CD8-positive, alpha-beta T cell (primary cell): ENCODE measurements at regions of chr4 and their contacts with region 1.

Region 1: DNA sequence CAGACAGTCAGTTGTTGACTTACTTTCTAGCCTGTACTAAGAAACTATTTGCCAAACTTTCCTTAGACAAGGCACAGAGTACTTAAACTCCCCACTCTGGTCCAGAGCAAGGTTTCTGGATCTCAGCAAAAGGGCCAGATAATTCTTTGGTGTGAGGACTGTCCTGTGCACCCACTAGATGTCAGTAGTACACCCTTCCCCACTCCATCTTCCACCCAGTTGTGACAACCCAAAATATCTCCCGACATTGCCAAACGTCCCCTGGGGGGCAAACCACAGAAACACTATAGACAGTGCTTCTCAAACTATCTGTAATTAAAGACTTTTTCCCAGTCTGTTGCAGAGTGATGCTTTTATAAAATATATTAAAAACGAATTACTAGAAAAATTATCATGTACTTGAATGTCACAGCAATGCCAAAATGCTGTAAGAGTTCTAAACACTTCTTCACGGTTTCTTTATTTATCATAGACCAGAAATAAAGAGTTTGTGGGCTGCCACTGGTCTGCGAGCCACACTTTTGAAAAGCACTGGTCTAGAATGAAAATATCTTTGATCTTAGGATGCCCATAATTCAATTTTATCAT is 203.5 kb downstream of the PRDM5 start:
- DNase-seq: peak in 4 of 9 experiments; percentile 17 to 63 (median 33)
- ATAC-seq: peak; percentile 46
- H3K4me3 ChIP-seq: no peak overlapping the region
- H3K4me3 Mint-ChIP-seq: no peak overlapping the region
- H3K27ac ChIP-seq: no peak overlapping the region
- H3K27ac Mint-ChIP-seq: no peak overlapping the region
- H3K4me1 ChIP-seq: no peaks in the 10 kb centered on the region
- H3K4me1 Mint-ChIP-seq: no peaks in the 10 kb centered on the region
- H3K27me3 ChIP-seq: no peaks in the 10 kb centered on the region
- H3K27me3 Mint-ChIP-seq: peaks cover 3% of the 10 kb centered on the region
- CTCF ChIP-seq: peak; percentile 33

Region 2: DNA sequence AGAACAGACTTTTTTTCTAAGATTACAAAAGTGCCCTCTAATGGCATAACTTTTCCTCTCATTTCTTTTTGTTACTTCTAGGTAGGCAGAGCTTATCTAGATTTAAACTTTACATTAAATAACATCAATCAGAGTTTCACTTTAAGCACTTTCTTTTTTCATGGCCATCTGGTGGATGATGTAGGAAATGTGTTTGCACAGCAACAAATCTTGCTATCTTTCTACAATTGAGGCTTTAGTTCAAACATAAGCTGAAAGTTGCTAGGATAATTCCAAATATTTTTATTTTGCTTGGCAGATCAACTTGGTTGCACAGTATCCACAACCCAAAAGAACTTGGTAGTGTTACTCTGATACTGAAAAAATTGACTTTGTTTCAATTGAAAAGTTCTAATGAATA is 331.2 kb after region 1 on chr4:
- CTCF ChIA-PET with region 1: interaction called, 5 read pairs
- POLR2A ChIA-PET with region 1: no interaction called
- intact Hi-C with region 1: loop called in 1 of 2 experiments (anchors 1 kb)
- DNase-seq: peak in 2 of 9 experiments; percentile 28 to 50
- ATAC-seq: no peak
- H3K4me3 ChIP-seq: no peak overlapping the region
- H3K4me3 Mint-ChIP-seq: no peak overlapping the region
- H3K27ac ChIP-seq: no peak overlapping the region
- H3K27ac Mint-ChIP-seq: no peak overlapping the region
- H3K4me1 ChIP-seq: no peaks in the 10 kb centered on the region
- H3K4me1 Mint-ChIP-seq: peaks cover 8% of the 10 kb centered on the region
- H3K27me3 ChIP-seq: no peaks in the 10 kb centered on the region
- H3K27me3 Mint-ChIP-seq: peaks cover 2% of the 10 kb centered on the region
- CTCF ChIP-seq: peak; percentile 42

Region 3: DNA sequence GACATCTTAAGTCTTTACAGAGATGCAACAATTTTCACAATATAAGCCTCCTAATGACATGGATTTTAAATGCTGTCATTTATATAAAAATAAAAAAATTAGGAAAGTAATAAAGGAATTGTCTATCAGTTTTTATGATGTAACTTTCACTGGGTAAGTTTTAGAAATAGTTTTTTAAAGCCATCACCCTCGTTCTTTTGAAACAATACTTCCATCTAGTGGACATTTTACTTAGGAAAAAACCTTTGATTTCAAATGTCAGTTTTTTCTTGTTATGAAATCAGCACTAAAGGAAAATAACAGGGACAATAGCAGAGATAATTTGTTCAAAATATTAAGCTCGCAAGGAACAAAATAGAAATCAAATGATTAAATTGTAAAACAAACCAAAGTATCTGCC is 377.6 kb after region 1 on chr4:
- CTCF ChIA-PET with region 1: interaction called, 4 read pairs
- POLR2A ChIA-PET with region 1: no interaction called
- intact Hi-C with region 1: loop called (anchors 1 to 2 kb)
- DNase-seq: peak in 2 of 9 experiments; percentile 20 to 52
- ATAC-seq: no peak
- H3K4me3 ChIP-seq: no peak overlapping the region
- H3K4me3 Mint-ChIP-seq: no peak overlapping the region
- H3K27ac ChIP-seq: no peak overlapping the region
- H3K27ac Mint-ChIP-seq: no peak overlapping the region
- H3K4me1 ChIP-seq: no peaks in the 10 kb centered on the region
- H3K4me1 Mint-ChIP-seq: peaks cover 2% of the 10 kb centered on the region
- H3K27me3 ChIP-seq: no peaks in the 10 kb centered on the region
- H3K27me3 Mint-ChIP-seq: no peaks in the 10 kb centered on the region
- CTCF ChIP-seq: peak; percentile 77

Region 4: GRCh38 chr4:121252224-121252806 is 533.2 kb after region 1 on chr4:
- CTCF ChIA-PET with region 1: no interaction called
- POLR2A ChIA-PET with region 1: no interaction called
- intact Hi-C with region 1: loop called in 1 of 2 experiments (anchors 5 kb)
- DNase-seq: peak in 8 of 9 experiments; percentile 30 to 80 (median 62)
- ATAC-seq: no peak
- H3K4me3 ChIP-seq: no peak overlapping the region
- H3K4me3 Mint-ChIP-seq: no peak overlapping the region
- H3K27ac ChIP-seq: peak overlapping the region in 1 of 2 experiments; percentile 95
- H3K27ac Mint-ChIP-seq: peak overlapping the region; percentile 55
- H3K4me1 ChIP-seq: peaks cover 36% of the 10 kb centered on the region
- H3K4me1 Mint-ChIP-seq: peaks cover 59% of the 10 kb centered on the region
- H3K27me3 ChIP-seq: no peaks in the 10 kb centered on the region
- H3K27me3 Mint-ChIP-seq: no peaks in the 10 kb centered on the region
- CTCF ChIP-seq: peak; percentile 85

Region 5: DNA sequence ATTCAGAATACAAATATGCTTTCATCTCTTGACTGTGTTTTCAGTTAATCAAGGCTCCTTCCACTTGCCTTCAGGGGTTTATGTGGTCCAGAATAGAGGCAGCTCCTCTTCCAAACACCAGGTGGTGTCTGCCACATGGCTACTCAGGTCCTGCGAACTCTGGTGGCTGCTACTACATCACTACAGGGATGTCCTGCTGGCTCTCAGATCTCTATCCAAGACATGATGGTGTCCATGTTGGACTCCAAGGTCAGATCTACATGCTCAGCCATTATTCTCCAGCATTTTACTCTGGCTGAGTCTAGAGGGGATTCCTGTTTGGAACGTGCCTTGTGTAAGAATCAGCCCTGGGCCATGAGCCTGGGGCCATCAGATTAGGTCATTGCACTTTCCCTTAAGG is 558.6 kb after region 1 on chr4:
- CTCF ChIA-PET with region 1: no interaction called
- POLR2A ChIA-PET with region 1: no interaction called
- intact Hi-C with region 1: no loop called
- DNase-seq: peak in 1 of 9 experiments; percentile 17
- ATAC-seq: no peak
- H3K4me3 ChIP-seq: no peak overlapping the region
- H3K4me3 Mint-ChIP-seq: no peak overlapping the region
- H3K27ac ChIP-seq: no peak overlapping the region
- H3K27ac Mint-ChIP-seq: no peak overlapping the region
- H3K4me1 ChIP-seq: no peaks in the 10 kb centered on the region
- H3K4me1 Mint-ChIP-seq: peaks cover 8% of the 10 kb centered on the region
- H3K27me3 ChIP-seq: no peaks in the 10 kb centered on the region
- H3K27me3 Mint-ChIP-seq: peaks cover 3% of the 10 kb centered on the region
- CTCF ChIP-seq: no peak